A673 (cell line): ENCODE measurements at regions of chr3 and their contacts with region 1.

Region 1: GRCh38 chr3:185659942-185660921 is 74.1 kb downstream of the SENP2 start:
- DNase-seq: peak; percentile 88
- H3K4me3 ChIP-seq: no peak overlapping the region
- H3K27ac ChIP-seq: no peak overlapping the region
- H3K4me1 ChIP-seq: peaks cover 5% of the 10 kb centered on the region
- H3K27me3 ChIP-seq: no peaks in the 10 kb centered on the region
- CTCF ChIP-seq: peak; percentile 99

Region 2: GRCh38 chr3:184568924-184569829 is 1091.1 kb before region 1 on chr3:
- CTCF ChIA-PET with region 1: no interaction called
- POLR2A ChIA-PET with region 1: no interaction called
- intact Hi-C with region 1: no loop called
- DNase-seq: peak; percentile 94
- H3K4me3 ChIP-seq: peak overlapping the region; percentile 57
- H3K27ac ChIP-seq: peak overlapping the region; percentile 59
- H3K4me1 ChIP-seq: peaks cover 35% of the 10 kb centered on the region
- H3K27me3 ChIP-seq: no peaks in the 10 kb centered on the region
- CTCF ChIP-seq: no peak

Region 3: GRCh38 chr3:185764163-185764979 is 104.1 kb after region 1 on chr3:
- CTCF ChIA-PET with region 1: interaction called, 26 read pairs
- POLR2A ChIA-PET with region 1: no interaction called
- intact Hi-C with region 1: loop called (anchors 5 kb)
- DNase-seq: no peak
- H3K4me3 ChIP-seq: no peak overlapping the region
- H3K27ac ChIP-seq: no peak overlapping the region
- H3K4me1 ChIP-seq: peaks cover 64% of the 10 kb centered on the region
- H3K27me3 ChIP-seq: no peaks in the 10 kb centered on the region
- CTCF ChIP-seq: no peak

Region 4: GRCh38 chr3:185959609-185960517 is 299.6 kb after region 1 on chr3:
- CTCF ChIA-PET with region 1: no interaction called
- POLR2A ChIA-PET with region 1: interaction called, 21 read pairs
- intact Hi-C with region 1: no loop called
- DNase-seq: peak; percentile 83
- H3K4me3 ChIP-seq: peak overlapping the region; percentile 23
- H3K27ac ChIP-seq: peak overlapping the region; percentile 86
- H3K4me1 ChIP-seq: peaks cover 18% of the 10 kb centered on the region
- H3K27me3 ChIP-seq: no peaks in the 10 kb centered on the region
- CTCF ChIP-seq: no peak

Region 5: DNA sequence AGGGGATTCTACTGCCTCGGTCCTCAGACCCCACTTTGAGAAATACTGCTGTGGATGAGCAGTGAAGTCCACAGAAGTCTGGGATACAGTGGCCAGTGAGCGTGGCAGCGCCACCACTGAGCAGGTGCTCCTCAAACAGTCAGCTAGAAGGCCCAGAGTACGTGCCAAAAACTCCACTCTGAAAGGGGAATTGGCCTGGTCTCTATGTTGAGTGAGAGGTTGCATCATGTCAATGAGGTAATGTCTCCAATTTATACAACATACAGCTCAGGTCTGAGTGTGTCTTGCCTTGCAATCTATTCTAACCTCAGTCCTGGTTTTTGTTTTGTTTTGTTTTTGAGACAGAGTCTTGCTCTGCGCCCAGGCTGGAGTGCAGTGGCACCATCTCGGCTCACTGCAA is 502.0 kb after region 1 on chr3:
- CTCF ChIA-PET with region 1: no interaction called
- POLR2A ChIA-PET with region 1: interaction called, 10 read pairs
- intact Hi-C with region 1: no loop called
- DNase-seq: no peak
- H3K4me3 ChIP-seq: no peak overlapping the region
- H3K27ac ChIP-seq: no peak overlapping the region
- H3K4me1 ChIP-seq: no peaks in the 10 kb centered on the region
- H3K27me3 ChIP-seq: no peaks in the 10 kb centered on the region
- CTCF ChIP-seq: no peak